Calu3 (cell line): ENCODE measurements at regions of chr14 and their contacts with region 1.

Region 1: GRCh38 chr14:70073924-70074566 is 114.7 kb downstream of the SLC8A3 start:
- DNase-seq: peak; percentile 85
- H3K4me3 Mint-ChIP-seq: no peak overlapping the region
- H3K27ac Mint-ChIP-seq: no peak overlapping the region
- H3K4me1 Mint-ChIP-seq: peaks cover 17% of the 10 kb centered on the region
- H3K27me3 Mint-ChIP-seq: peaks cover 54% of the 10 kb centered on the region
- CTCF ChIP-seq: peak; percentile 92

Region 2: GRCh38 chr14:69726761-69727511 is 347.1 kb before region 1 on chr14:
- CTCF ChIA-PET with region 1: interaction called, 12 read pairs
- intact Hi-C with region 1: no loop called
- DNase-seq: peak; percentile 83
- H3K4me3 Mint-ChIP-seq: peak overlapping the region; percentile 65
- H3K27ac Mint-ChIP-seq: no peak overlapping the region
- H3K4me1 Mint-ChIP-seq: peaks cover 14% of the 10 kb centered on the region
- H3K27me3 Mint-ChIP-seq: peaks cover 15% of the 10 kb centered on the region
- CTCF ChIP-seq: peak; percentile 94

Region 3: DNA sequence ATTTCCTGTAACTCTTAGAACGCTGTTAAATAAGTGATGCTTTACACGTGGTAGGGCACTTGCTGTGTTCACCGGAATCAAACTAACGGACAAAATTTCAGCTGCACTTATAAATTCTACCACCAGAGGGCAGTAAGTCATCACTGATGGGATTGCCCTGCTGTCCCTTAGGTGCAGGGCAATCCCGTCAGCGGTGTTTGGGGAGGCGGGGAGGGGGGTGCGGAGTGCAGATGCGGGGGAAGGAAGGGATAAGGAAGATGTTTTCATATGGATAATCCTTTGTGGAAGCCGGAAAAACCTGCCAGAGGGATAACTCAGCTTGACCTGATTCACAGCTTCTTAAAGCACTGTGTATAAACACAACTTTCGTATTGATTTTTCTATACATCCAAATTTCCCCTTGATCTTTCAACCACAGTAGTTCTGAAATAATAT is 255.3 kb before region 1 on chr14:
- CTCF ChIA-PET with region 1: interaction called, 6 read pairs
- intact Hi-C with region 1: loop called (anchors 1 kb)
- DNase-seq: peak; percentile 78
- H3K4me3 Mint-ChIP-seq: no peak overlapping the region
- H3K27ac Mint-ChIP-seq: no peak overlapping the region
- H3K4me1 Mint-ChIP-seq: peaks cover 10% of the 10 kb centered on the region
- H3K27me3 Mint-ChIP-seq: no peaks in the 10 kb centered on the region
- CTCF ChIP-seq: peak; percentile 80

Region 4: GRCh38 chr14:70045844-70046535 is 28.1 kb before region 1 on chr14:
- CTCF ChIA-PET with region 1: interaction called, 34 read pairs
- intact Hi-C with region 1: loop called (anchors 1 kb)
- DNase-seq: peak; percentile 90
- H3K4me3 Mint-ChIP-seq: no peak overlapping the region
- H3K27ac Mint-ChIP-seq: peak overlapping the region; percentile 9
- H3K4me1 Mint-ChIP-seq: peaks cover 41% of the 10 kb centered on the region
- H3K27me3 Mint-ChIP-seq: peaks cover 16% of the 10 kb centered on the region
- CTCF ChIP-seq: peak; percentile 76

Region 5: DNA sequence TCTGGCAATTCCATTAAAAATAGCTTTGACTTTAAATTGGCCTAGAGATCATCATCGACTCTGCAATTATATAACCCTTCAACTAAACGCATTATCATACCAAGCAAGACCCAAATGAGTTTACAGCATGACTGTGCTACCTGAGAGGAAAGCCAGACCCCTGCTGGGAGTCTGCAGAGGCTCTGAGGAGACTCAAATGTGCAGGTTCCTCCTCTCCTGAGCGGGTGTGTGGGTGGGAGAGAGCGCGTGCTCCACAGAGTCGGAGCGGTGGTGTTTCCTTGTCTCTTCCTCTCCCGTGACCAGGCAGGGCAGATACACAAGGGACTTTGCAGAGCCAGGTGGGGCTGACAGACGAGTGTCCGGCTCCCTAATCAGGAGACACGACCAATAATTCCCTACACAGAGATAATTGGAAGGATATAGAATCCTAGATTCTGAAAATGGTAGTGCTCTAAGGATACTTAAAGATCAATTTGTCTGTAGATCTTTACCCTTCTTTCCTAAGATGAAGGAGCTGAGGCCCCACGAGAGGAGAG is 40.6 kb after region 1 on chr14:
- CTCF ChIA-PET with region 1: no interaction called
- intact Hi-C with region 1: no loop called
- DNase-seq: no peak
- H3K4me3 Mint-ChIP-seq: no peak overlapping the region
- H3K27ac Mint-ChIP-seq: no peak overlapping the region
- H3K4me1 Mint-ChIP-seq: no peaks in the 10 kb centered on the region
- H3K27me3 Mint-ChIP-seq: peaks cover 100% of the 10 kb centered on the region
- CTCF ChIP-seq: no peak